OCI-LY7 (cell line): ENCODE measurements at regions of chr1 and their contacts with region 1.

Region 1: GRCh38 chr1:244801246-244801645 is 34.2 kb upstream of the COX20 start:
- DNase-seq: peak; percentile 90
- H3K4me3 ChIP-seq: peak overlapping the region; percentile 44
- H3K27ac ChIP-seq: no peak overlapping the region
- H3K4me1 ChIP-seq: peaks cover 10% of the 10 kb centered on the region
- CTCF ChIP-seq: peak; percentile 95

Region 2: DNA sequence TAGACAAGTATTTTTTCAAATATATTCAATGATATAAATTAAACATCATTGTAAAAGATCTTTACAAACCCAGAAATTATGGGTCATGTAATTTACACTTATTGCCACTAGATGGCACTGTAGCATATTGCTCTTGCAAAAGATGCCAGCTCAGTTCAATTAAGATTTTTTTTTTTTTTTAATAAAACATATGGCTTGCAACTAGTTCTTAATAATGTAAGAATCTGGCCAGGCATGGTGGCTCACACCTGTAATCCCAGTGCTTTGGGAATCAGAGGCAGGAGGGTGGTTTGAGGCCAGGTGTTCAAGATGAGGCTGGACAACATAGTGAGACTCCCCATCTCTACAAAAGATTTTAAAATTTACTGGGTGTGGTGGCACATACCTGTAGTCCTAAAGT is 197.7 kb before region 1 on chr1:
- CTCF ChIA-PET with region 1: interaction called, 8 read pairs
- POLR2A ChIA-PET with region 1: interaction called, 11 read pairs
- intact Hi-C with region 1: loop called (anchors 1 kb)
- DNase-seq: peak; percentile 62
- H3K4me3 ChIP-seq: no peak overlapping the region
- H3K27ac ChIP-seq: no peak overlapping the region
- H3K4me1 ChIP-seq: no peaks in the 10 kb centered on the region
- CTCF ChIP-seq: peak; percentile 98

Region 3: GRCh38 chr1:244652699-244653466 is 148.4 kb before region 1 on chr1 and contains the start of gene DESI2:
- CTCF ChIA-PET with region 1: no interaction called
- POLR2A ChIA-PET with region 1: interaction called, 3 read pairs
- intact Hi-C with region 1: loop called (anchors 2 kb)
- DNase-seq: peak; percentile 100
- H3K4me3 ChIP-seq: peak within 1 kb of the TSS; percentile 82
- H3K27ac ChIP-seq: peak within 1 kb of the TSS; percentile 81
- H3K4me1 ChIP-seq: peaks cover 27% of the 10 kb centered on the region
- CTCF ChIP-seq: peak; percentile 71
- total RNA-seq, gene DESI2: 40.0 and 40.6 TPM in 2 replicates

Region 4: DNA sequence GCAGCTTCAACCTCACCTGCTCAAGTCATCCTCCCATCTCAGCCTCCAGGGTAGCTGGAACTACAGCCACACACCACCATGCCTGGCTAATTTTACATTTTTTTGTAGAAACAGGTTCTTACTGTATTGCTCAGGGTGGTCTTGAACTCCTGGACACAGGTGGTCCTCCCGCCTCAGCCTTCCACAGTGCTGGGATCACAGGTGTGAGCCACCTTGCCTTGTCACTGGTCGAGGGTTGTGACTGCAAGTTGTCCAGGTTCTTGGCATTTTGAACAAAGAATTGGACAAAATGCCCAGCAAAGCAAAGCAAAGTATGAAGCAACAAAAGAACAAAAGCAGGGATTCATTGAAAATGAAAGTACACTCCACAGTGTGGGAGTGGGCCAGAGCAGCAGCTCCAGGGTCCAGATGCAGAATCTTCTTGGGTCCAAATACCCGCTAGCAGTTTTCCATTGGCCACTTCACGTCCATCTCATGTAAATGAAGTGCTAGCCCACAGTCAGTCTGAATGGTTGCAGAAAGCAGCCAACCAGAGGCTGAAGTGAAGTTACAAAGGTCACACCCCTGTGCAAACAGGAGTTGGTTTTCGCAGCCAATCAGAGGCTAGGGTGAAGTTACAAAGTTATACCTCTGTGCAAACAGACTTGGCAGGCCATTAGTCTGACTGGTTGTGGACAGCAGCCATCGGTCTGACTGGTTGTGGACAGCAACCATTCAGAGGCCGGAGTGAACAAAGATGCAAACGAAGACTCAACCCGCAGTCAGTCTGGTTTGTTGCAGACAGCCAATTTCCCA is 244.0 kb after region 1 on chr1:
- CTCF ChIA-PET with region 1: interaction called, 19 read pairs
- POLR2A ChIA-PET with region 1: interaction called, 17 read pairs
- intact Hi-C with region 1: loop called (anchors 1 kb)
- DNase-seq: no peak
- H3K4me3 ChIP-seq: no peak overlapping the region
- H3K27ac ChIP-seq: no peak overlapping the region
- H3K4me1 ChIP-seq: peaks cover 8% of the 10 kb centered on the region
- CTCF ChIP-seq: no peak